Endothelial cell of umbilical vein (primary cell): ENCODE measurements at regions of chr1 and their contacts with region 1.

Region 1: GRCh38 chr1:201559679-201560162 is 20.8 kb downstream of the NAV1 start:
- DNase-seq: peak; percentile 82
- H3K4me3 ChIP-seq: no peak overlapping the region
- H3K27ac ChIP-seq: no peak overlapping the region
- H3K4me1 ChIP-seq: peaks cover 50% of the 10 kb centered on the region
- H3K27me3 ChIP-seq: no peaks in the 10 kb centered on the region
- CTCF ChIP-seq: peak; percentile 94 to 97
- POLR2A ChIP-seq: no peak

Region 2: GRCh38 chr1:201456499-201457309 is 103.0 kb before region 1 on chr1:
- CTCF ChIA-PET with region 1: no interaction called
- POLR2A ChIA-PET with region 1: no interaction called
- dilution Hi-C with region 1: no loop called
- intact Hi-C with region 1: no loop called
- DNase-seq: peak; percentile 47
- H3K4me3 ChIP-seq: no peak overlapping the region
- H3K27ac ChIP-seq: no peak overlapping the region
- H3K4me1 ChIP-seq: peaks cover 11% of the 10 kb centered on the region
- H3K27me3 ChIP-seq: no peaks in the 10 kb centered on the region
- CTCF ChIP-seq: no peak
- POLR2A ChIP-seq: no peak

Region 3: GRCh38 chr1:201530741-201531531 is 28.8 kb before region 1 on chr1:
- CTCF ChIA-PET with region 1: interaction called, 36 read pairs
- POLR2A ChIA-PET with region 1: no interaction called
- dilution Hi-C with region 1: no loop called
- intact Hi-C with region 1: loop called (anchors 1 kb)
- DNase-seq: peak; percentile 77
- H3K4me3 ChIP-seq: no peak overlapping the region
- H3K27ac ChIP-seq: no peak overlapping the region
- H3K4me1 ChIP-seq: peaks cover 12% of the 10 kb centered on the region
- H3K27me3 ChIP-seq: no peaks in the 10 kb centered on the region
- CTCF ChIP-seq: peak; percentile 87 to 89
- POLR2A ChIP-seq: no peak

Region 4: DNA sequence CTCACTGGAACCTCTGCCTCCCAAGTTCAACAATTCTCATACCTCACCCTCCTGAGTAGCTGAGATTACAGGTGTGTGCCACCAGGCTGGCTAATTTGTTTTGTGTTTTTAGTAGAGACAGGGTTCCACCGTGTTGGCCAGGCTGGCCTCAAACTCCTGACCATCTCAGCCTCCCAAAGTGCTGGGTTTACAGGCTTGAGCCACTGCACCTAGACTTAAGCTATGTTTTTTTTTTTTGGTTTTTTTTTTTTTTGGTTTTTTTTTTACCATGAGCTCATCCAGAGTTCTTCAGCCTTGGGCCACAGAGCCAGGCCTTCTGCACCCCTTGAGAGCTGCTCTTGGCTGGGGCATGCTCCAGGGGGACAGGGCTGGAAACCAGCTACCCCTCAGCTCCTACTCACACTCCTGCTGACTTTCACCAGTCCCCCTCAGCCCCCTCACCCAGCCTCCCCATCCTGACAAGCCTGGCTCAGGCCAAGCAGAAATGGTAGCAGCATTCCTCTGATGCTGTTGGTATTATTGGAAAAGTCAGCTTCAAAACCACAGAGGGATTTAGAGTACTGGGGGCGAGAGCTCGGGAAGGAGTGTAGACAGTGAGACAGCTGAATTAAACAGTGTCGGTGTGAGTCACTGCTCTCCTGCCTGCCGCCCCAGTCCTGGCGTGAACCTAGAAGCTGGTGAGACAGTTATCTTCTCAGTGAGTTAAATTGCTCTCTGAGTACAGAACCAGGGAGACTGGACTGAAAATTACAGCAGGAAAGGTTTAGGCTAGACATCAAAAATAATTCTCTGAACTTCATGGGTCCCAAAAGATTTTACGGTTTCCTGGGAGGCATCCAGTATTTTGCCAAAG is 42.9 kb after region 1 on chr1:
- CTCF ChIA-PET with region 1: interaction called, 27 read pairs
- POLR2A ChIA-PET with region 1: no interaction called
- dilution Hi-C with region 1: no loop called
- intact Hi-C with region 1: loop called (anchors 2 kb)
- DNase-seq: peak; percentile 42
- H3K4me3 ChIP-seq: no peak overlapping the region
- H3K27ac ChIP-seq: peak overlapping the region; percentile 58
- H3K4me1 ChIP-seq: peaks cover 37% of the 10 kb centered on the region
- H3K27me3 ChIP-seq: no peaks in the 10 kb centered on the region
- CTCF ChIP-seq: no peak
- POLR2A ChIP-seq: no peak

Region 5: DNA sequence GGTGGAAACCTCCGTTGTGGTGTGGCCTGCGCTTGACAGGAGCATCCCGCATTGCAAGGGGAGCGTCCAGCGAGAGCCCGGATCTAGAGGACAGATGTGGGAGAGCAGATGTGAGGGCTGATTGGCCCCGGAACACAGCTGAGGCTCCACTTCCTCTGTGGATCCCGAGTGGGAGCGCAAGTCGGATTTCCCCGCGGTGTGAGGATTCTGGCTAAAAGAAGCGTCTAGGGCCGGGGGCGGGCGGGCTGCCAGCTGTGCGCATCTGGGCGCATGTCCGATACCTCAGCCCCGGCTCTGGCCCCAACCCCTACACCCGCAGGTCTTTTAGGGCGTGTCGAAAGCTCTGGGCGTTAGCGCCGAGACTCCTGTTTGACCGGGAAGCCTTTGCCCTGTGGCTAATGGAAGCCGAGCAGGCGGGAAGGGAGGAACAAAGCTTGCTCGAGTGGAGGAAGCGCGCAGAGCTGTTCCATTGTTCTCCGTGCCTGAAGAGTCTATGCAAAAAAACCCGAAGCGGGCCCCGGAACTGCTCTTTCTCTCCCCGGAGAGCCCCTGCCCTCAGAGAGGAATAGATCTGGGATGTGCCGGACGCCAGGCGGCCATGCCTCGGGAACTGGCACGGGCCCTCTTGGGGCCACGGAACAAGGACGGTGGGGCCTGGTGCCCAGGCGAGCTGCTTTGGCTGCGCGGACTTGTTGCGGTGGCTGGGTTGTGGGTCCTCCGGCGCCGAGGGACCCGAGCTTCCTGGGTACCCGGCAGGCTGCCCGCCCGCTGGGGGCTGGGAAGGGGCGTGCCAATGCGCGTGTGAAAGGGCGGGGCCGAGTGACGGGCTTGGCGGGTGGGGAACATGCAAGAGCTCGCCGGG is 90.3 kb after region 1 on chr1:
- CTCF ChIA-PET with region 1: interaction called, 42 read pairs
- POLR2A ChIA-PET with region 1: no interaction called
- dilution Hi-C with region 1: no loop called
- intact Hi-C with region 1: loop called (anchors 1 kb)
- DNase-seq: peak; percentile 65
- H3K4me3 ChIP-seq: peak overlapping the region; percentile 30 to 57 (median 49)
- H3K27ac ChIP-seq: peak overlapping the region; percentile 50
- H3K4me1 ChIP-seq: peaks cover 30% of the 10 kb centered on the region
- H3K27me3 ChIP-seq: no peaks in the 10 kb centered on the region
- CTCF ChIP-seq: no peak
- POLR2A ChIP-seq: no peak

Region 6: GRCh38 chr1:201703621-201704439 is 144.1 kb after region 1 on chr1:
- CTCF ChIA-PET with region 1: interaction called, 236 read pairs
- POLR2A ChIA-PET with region 1: no interaction called
- dilution Hi-C with region 1: loop called (anchors 25 kb)
- intact Hi-C with region 1: loop called (anchors 1 kb)
- DNase-seq: peak; percentile 73
- H3K4me3 ChIP-seq: no peak overlapping the region
- H3K27ac ChIP-seq: no peak overlapping the region
- H3K4me1 ChIP-seq: no peaks in the 10 kb centered on the region
- H3K27me3 ChIP-seq: no peaks in the 10 kb centered on the region
- CTCF ChIP-seq: peak; percentile 96 to 98
- POLR2A ChIP-seq: no peak